MCF 10A (cell line): ENCODE measurements at regions of chr9 and their contacts with region 1.

Region 1: DNA sequence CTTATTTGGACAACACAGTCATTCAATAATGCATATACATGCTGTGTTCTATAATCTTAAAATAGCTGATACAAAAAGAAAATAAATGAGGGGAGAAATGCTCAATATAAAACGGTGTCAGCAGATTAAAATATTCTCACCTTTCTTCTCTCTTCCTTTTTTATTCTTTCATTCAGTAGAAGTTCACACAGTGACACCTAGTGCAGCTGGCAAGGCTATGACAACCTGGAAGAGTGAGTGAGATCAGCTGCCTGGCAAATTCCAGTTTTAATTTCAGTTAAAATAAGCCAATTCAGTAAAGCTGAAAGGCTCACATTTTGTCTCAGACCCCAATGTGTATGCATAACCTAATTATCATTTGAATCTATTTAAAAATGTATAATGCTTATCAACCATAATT is 150.3 kb downstream of the RASEF start:
- DNase-seq: peak; percentile 9
- H3K4me3 Mint-ChIP-seq: no peak overlapping the region
- H3K27ac Mint-ChIP-seq: no peak overlapping the region
- H3K4me1 Mint-ChIP-seq: no peaks in the 10 kb centered on the region
- H3K27me3 Mint-ChIP-seq: no peaks in the 10 kb centered on the region
- CTCF ChIP-seq: no peak

Region 2: DNA sequence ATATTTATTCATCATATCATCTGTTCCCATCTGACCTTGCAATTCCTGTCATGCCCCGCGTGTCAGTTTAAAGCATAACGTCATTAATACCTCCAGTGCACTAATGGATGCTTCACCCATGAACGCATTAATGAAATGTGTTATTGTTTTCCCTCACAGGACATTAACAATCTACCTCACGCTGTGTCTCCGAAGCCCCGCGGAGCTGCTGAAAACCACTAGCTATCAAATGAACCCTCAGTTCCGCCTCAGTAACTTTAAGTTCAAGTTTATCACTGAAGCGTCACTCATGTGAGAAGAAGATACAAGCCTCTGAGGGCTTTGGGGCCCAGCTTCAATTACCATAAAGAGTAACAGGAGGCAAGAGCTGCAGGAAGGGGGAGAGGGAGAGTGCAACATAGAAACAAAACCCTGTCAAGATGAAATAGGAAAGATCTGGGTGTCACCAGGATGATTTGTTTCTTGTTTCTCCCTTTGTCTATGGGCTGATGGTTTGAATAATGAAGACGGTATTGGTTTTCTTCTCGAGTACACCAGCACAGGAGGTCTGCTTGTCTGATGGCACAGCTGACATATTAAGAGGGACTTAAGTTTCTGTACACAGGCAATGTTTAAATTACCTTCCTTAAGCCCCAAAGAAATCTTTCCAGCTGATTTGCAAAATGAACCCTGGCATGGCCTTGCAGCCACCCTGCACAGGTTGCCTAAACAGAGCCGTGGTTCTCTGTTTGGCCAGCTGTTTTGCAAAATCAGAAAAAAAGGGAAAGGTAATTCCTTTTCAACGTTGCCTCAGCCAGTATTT is 11.0 kb after region 1 on chr9:
- CTCF ChIA-PET with region 1: interaction called, 19 read pairs
- POLR2A ChIA-PET with region 1: no interaction called
- intact Hi-C with region 1: no loop called
- DNase-seq: no peak
- H3K4me3 Mint-ChIP-seq: no peak overlapping the region
- H3K27ac Mint-ChIP-seq: no peak overlapping the region
- H3K4me1 Mint-ChIP-seq: no peaks in the 10 kb centered on the region
- H3K27me3 Mint-ChIP-seq: no peaks in the 10 kb centered on the region
- CTCF ChIP-seq: no peak

Region 3: GRCh38 chr9:82981552-82981951 is 68.9 kb after region 1 on chr9:
- CTCF ChIA-PET with region 1: no interaction called
- POLR2A ChIA-PET with region 1: no interaction called
- intact Hi-C with region 1: no loop called
- DNase-seq: no peak
- H3K4me3 Mint-ChIP-seq: no peak overlapping the region
- H3K27ac Mint-ChIP-seq: no peak overlapping the region
- H3K4me1 Mint-ChIP-seq: peaks cover 15% of the 10 kb centered on the region
- H3K27me3 Mint-ChIP-seq: no peaks in the 10 kb centered on the region
- CTCF ChIP-seq: no peak

Region 4: GRCh38 chr9:83062656-83063527 is 150.2 kb after region 1 on chr9 and contains the start of gene RASEF:
- CTCF ChIA-PET with region 1: no interaction called
- POLR2A ChIA-PET with region 1: no interaction called
- intact Hi-C with region 1: no loop called
- DNase-seq: peak; percentile 65
- H3K4me3 Mint-ChIP-seq: peak within 1 kb of the TSS; percentile 94
- H3K27ac Mint-ChIP-seq: peak within 1 kb of the TSS; percentile 52
- H3K4me1 Mint-ChIP-seq: peaks cover 47% of the 10 kb centered on the region
- H3K27me3 Mint-ChIP-seq: no peaks in the 10 kb centered on the region
- CTCF ChIP-seq: peak; percentile 29
- total RNA-seq, gene RASEF: 6.9 and 7.5 TPM in 2 replicates